Dendritic cell treated with granulocyte-macrophage colony-stimulating factor and Interleukin-4, amounts not matched to agents 40 ng/mL and 50 ng/mL, for 4 days (primary cell): ENCODE measurements at regions of chr18 and their contacts with region 1.

Region 1: DNA sequence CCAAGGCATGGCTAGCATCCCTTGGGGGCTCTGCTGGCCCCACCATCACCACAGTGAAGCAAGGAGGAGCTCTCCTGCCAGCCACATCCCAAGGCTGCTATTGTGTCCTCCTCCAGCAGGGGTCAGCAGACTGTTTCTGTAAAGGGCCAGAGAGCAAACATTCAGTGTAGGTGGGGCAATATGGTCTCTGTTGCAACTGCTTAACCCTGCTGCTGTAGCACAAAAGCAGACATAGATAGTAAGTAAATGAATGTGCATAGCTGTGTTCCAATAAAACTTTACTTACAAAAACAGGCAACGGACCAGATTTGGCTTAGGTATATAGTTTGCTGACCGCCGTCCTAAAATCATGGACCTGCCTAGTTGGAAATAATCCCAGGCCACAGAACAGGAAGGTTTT is 36.4 kb upstream of the ZBTB7C start:
- H3K4me3 Mint-ChIP-seq: no peak overlapping the region
- H3K27ac Mint-ChIP-seq: no peak overlapping the region
- H3K4me1 Mint-ChIP-seq: peaks cover 10% of the 10 kb centered on the region
- H3K27me3 Mint-ChIP-seq: peaks cover 57% of the 10 kb centered on the region

Region 2: DNA sequence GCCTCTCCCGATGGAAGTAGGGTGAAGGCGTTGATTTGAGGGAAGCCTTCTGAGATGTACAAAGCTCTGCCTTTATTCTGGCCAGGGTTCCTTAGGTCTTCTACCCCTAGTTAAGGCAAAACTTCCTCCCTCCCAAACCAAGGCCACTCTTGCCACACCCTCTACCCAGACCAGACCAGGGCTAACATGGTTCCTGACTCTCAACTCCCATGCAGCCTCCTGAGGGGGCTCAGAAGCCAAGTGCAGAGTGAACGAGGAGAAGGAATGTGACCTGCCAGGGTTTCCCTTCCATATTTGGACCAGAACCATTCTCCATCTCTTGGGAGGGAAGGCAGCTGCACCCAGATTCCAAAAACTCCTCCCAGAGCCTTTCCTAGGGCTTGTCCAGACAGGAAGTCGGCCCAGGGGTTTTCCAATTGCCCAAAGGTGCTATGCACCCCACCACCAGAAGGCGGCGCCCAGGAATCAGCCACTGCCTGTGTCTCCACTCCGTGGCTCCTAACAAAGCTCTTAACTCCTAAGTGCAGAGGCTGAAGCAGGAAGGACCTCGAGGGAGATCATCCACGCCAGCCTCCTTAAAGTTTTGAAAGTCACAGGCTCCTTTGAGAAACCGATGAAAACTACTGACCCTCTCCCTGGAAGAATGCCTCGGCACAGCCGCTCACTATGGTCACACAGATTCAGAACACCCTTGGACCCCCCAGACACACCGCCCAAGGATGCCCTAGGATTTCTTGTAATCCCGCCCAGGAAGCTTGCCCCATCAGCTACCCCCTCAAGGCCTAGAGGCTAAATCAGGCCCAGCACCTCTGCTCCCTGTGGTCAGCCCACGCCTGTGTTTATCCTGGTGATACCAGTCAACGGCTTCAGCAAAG is 672.9 kb before region 1 on chr18:
- intact Hi-C with region 1: loop called (anchors 5 kb)
- H3K4me3 Mint-ChIP-seq: no peak overlapping the region
- H3K27ac Mint-ChIP-seq: no peak overlapping the region
- H3K4me1 Mint-ChIP-seq: no peaks in the 10 kb centered on the region
- H3K27me3 Mint-ChIP-seq: peaks cover 10% of the 10 kb centered on the region

Region 3: GRCh38 chr18:48030616-48031480 is 414.7 kb before region 1 on chr18:
- intact Hi-C with region 1: loop called (anchors 5 kb)
- H3K4me3 Mint-ChIP-seq: no peak overlapping the region
- H3K27ac Mint-ChIP-seq: no peak overlapping the region
- H3K4me1 Mint-ChIP-seq: peaks cover 6% of the 10 kb centered on the region
- H3K27me3 Mint-ChIP-seq: no peaks in the 10 kb centered on the region

Region 4: GRCh38 chr18:48230467-48231113 is 214.9 kb before region 1 on chr18:
- intact Hi-C with region 1: loop called (anchors 1 kb)
- H3K4me3 Mint-ChIP-seq: no peak overlapping the region
- H3K27ac Mint-ChIP-seq: no peak overlapping the region
- H3K4me1 Mint-ChIP-seq: peaks cover 34% of the 10 kb centered on the region
- H3K27me3 Mint-ChIP-seq: peaks cover 5% of the 10 kb centered on the region

Region 5: DNA sequence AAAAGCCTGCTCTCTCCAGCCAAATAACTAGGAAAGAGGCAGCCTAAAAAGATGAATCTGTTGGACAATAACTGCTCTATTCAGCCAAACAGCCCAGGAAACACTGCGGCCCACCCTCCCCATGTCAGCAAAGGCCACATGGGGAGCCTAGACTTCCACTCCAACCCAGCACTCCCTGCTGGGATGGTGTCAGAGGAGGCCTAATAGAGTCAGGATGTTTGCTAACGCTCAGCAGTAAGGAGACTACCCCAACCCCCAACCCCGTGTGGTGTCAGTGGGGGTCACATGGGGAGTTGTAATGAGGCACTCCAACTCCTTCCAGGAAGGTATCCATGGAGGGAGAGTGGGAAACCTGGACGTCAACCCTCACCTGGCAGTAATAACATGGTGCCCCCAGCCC is 78.0 kb before region 1 on chr18:
- intact Hi-C with region 1: no loop called
- H3K4me3 Mint-ChIP-seq: no peak overlapping the region
- H3K27ac Mint-ChIP-seq: no peak overlapping the region
- H3K4me1 Mint-ChIP-seq: no peaks in the 10 kb centered on the region
- H3K27me3 Mint-ChIP-seq: peaks cover 36% of the 10 kb centered on the region

Region 6: DNA sequence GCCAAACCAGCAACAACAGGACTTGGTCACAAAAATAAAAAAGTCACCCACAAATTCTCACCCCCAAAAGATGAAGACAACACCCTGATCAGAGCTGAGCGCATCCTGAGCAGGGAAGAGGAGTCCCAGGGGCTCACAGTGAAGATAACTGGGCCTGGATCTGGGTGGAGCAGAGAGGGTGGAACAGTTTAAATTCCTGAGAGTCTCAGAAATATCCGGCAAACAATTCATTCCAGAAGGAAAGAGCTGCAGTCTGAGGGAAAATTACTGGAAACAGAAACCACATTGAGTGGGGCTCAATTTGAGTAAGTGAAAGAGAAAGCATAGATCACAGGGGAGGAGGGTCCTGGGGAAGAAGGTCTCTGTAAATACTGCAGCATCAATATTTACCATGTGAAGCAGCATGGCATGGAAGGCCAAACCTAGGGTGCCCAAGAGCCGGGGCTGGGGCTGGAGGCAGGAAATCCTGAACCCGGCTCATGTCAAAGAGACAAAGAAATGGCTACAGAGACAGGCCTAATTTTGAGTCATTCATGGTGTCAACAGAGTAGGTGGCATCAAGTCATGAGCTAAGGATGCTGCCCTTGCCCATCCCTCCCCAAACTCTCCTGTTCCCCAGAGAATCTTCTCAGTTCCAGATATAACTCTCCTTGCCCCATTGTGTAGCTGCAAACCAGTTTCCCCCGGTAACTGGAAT is 25.1 kb after region 1 on chr18:
- intact Hi-C with region 1: loop called (anchors 2 kb)
- H3K4me3 Mint-ChIP-seq: no peak overlapping the region
- H3K27ac Mint-ChIP-seq: no peak overlapping the region
- H3K4me1 Mint-ChIP-seq: no peaks in the 10 kb centered on the region
- H3K27me3 Mint-ChIP-seq: peaks cover 30% of the 10 kb centered on the region